Gastrocnemius medialis (tissue), 4 donors: ENCODE measurements at regions of chr1 and their contacts with region 1.

Region 1: GRCh38 chr1:36463803-36464604 is at the start of gene MRPS15:
- DNase-seq: peak; percentile 94 to 96
- ATAC-seq: peak; percentile 97 to 100
- H3K4me3 ChIP-seq: peak within 1 kb of the TSS; percentile 76 to 92 (median 86)
- H3K27ac ChIP-seq: peak within 1 kb of the TSS; percentile 86 to 97 (median 96)
- H3K4me1 ChIP-seq: peaks cover 18 to 20% of the 10 kb centered on the region in 2 donors
- H3K27me3 ChIP-seq: no peaks in the 10 kb centered on the region
- CTCF ChIP-seq: no peak
- POLR2A ChIP-seq: peak; percentile 74 to 78
- total RNA-seq, gene MRPS15: 106 to 215 (median 160) TPM

Region 2: GRCh38 chr1:35557292-35558063 is 906.5 kb before region 1 on chr1 and contains the starts of genes KIAA0319L and NCDN:
- in situ Hi-C with region 1: no loop called
- intact Hi-C with region 1: loop called (anchors 10 kb)
- DNase-seq: peak; percentile 97
- ATAC-seq: peak; percentile 94 to 97
- H3K4me3 ChIP-seq: peak within 1 kb of the TSS; percentile 84 to 99 (median 98)
- H3K27ac ChIP-seq: peak within 1 kb of the TSS; percentile 91 to 100 (median 99)
- H3K4me1 ChIP-seq: peaks cover 45 to 69% of the 10 kb centered on the region in 2 donors
- H3K27me3 ChIP-seq: no peaks in the 10 kb centered on the region
- CTCF ChIP-seq: peak in 1 of 5 experiments; percentile 12
- POLR2A ChIP-seq: peak; percentile 68 to 81
- total RNA-seq, gene KIAA0319L: 44.4 to 85.0 (median 69.2) TPM
- total RNA-seq, gene NCDN: 8.7 to 16.8 (median 14.0) TPM

Region 3: DNA sequence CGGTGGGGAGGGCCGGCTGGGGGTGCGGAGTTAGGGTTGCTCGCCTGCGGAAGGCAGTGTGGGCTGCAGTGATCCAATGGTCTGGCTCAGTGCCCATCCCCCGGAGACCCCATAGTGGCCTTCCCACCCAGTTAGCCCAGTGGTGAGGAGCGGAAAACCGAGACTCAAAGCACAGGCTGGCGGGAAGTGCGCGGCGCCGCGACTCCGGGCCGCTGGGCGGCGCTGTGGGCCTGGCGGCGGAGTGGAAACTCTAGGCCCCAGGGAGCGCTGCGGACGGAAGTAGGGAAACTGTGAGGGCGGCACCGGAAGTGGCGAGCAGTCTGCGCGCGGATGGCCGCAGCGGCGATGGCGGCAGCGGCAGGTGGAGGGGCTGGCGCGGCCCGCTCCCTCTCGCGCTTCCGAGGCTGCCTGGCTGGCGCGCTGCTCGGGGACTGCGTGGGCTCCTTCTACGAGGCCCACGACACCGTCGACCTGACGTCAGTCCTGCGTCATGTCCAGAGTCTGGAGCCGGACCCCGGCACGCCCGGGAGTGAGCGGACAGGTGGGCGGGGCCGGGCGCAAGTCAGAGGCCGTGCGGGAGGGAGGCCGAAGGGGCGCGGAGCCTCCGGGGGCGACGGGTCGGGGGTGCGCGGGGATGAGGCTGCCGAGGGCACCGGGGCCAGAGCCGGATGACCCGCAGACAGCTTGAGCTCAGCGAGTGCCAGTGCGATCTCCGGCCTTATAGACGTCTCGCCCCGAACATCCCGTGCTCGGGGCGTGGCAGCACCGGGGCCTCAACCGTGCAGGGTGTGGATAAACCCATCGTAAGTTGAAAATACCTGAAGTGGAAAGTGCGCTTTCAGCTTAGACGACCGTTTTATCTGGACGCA is 375.2 kb before region 1 on chr1 and contains the start of gene ADPRS:
- in situ Hi-C with region 1: no loop called
- intact Hi-C with region 1: loop called (anchors 1 kb)
- DNase-seq: peak; percentile 79 to 83
- ATAC-seq: peak; percentile 93 to 94
- H3K4me3 ChIP-seq: peak within 1 kb of the TSS; percentile 75 to 98 (median 90)
- H3K27ac ChIP-seq: peak within 1 kb of the TSS; percentile 78 to 96 (median 89)
- H3K4me1 ChIP-seq: peaks cover 16 to 32% of the 10 kb centered on the region in 2 donors
- H3K27me3 ChIP-seq: peaks cover 9 to 26% (median 23%) of the 10 kb centered on the region in 3 donors
- CTCF ChIP-seq: peak; percentile 98 to 99 (median 99)
- POLR2A ChIP-seq: peak; percentile 79 to 91
- total RNA-seq, gene ADPRS: 46.7 to 67.3 (median 54.0) TPM

Region 4: DNA sequence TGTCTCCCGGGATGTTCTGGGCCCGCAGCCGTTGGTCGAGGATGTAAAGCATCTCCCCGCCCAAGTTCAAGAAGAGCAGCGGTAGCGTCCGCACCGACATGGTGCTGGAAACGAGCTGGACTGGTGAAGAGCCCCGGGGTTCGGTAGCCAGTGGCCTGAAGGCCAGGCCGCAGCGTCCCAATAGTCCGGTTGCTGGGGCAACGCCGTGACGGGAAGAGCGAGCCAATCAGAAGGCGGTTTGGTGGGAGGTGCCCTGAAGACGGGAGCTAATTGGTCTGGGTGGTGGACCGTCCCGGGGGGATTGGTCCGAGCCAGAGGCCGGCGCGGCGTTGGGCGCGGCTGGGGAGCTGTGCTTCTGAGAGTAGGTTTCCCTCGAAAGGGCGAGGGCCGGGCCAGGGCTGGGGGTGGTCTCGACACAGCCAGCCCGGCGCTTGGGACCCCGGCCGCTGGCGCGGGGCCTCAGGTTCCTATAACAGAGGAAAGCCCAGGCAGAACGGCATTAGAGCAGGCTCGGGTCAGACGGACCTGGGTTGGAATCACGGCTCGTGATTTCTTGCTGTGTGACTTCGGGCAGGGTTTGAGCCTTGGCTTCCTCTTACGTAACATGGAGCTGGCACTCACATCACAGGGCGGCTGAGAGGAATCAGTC is 13.6 kb before region 1 on chr1 and contains the start of gene OSCP1:
- in situ Hi-C with region 1: no loop called
- intact Hi-C with region 1: loop called (anchors 1 kb)
- DNase-seq: peak; percentile 89 to 94
- ATAC-seq: peak; percentile 98 to 99
- H3K4me3 ChIP-seq: peak within 1 kb of the TSS; percentile 73 to 85 (median 76)
- H3K27ac ChIP-seq: peak within 1 kb of the TSS; percentile 90 to 97 (median 95)
- H3K4me1 ChIP-seq: peaks cover 5 to 11% of the 10 kb centered on the region in 2 donors
- H3K27me3 ChIP-seq: no peaks in the 10 kb centered on the region
- CTCF ChIP-seq: no peak
- POLR2A ChIP-seq: peak; percentile 84 to 92
- total RNA-seq, gene OSCP1: 3.3 to 6.7 (median 4.7) TPM